ENCODE measurements at regions of chr16 and their contacts with region 1.

Region 1: DNA sequence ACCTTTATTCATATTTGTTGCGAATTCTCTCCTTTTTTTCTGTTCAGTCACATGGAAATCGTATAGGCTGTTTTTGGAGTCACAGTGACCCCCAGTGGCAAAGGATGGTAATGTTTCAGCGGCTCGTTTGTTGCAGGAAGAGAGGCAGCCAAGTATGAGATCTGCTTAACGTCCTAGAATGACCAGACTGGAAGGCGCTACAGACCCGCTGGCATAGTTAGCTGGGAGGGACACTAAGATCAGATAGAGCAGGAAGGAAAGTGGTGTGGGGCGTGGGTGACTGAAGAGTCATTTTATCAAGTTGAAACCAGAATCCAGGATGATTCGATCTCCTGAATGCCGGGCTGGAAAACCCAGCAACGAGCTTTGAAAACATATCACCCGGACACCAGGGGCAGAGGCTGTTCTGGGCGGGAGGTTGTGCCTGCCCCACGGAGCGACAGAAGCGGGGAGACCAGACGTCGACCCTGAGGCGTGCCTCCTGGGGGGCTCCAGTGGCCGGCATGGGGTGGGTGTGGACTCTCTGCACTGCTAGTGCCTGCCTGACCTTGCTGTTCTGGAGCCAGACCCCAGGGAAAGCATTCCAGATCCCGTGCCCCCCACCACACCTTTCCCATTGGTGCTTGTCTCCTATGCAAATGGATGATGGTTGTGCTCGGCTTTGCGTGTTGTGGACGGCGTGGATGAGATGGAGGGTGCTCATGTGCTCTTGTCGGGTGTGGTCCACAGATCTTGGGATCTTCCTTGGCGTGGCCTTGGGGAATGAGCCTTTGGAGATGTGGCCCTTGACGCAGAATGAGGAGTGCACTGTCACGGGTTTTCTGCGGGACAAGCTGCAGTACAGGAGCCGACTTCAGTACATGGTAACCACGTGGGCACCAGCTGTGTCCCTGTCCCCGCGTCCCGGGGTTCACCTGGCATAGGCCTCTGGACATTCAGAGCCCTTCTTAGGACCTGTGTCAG is 7.7 kb downstream of the IL34 start:
- DNase-seq: peak; percentile 89
- H3K4me3 Mint-ChIP-seq: no peak overlapping the region
- H3K27ac Mint-ChIP-seq: no peak overlapping the region
- H3K4me1 Mint-ChIP-seq: peaks cover 5% of the 10 kb centered on the region
- H3K27me3 Mint-ChIP-seq: peaks cover 1% of the 10 kb centered on the region

Region 2: DNA sequence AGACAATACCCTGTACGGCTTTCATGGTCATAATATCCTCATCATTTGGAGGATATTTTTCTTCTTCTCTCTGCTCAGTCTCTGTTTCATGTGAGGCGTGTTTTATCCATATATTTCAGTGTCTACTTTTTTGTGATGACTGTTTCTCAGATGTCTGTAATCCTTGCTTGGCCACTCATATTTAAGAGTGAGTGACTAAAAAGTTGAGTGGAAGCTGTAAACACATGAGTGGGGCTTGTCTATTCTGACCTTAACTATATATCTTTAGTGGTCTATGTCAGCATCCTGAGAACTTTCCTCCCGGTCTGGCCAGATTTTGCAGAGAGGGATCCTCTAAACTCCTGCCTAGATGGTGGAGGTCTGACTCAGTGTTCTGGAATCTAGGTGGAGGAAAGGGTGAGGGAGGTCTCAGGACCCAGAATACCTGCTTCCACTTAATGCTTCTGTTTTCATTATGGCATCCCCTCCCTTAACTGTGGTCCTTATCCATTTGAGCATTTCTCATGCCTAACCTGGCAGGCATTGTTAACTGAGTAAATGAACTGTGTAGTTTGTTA is 349.1 kb before region 1 on chr16:
- CTCF ChIA-PET with region 1: no interaction called
- POLR2A ChIA-PET with region 1: no interaction called
- intact Hi-C with region 1: no loop called
- DNase-seq: no peak
- H3K4me3 Mint-ChIP-seq: no peak overlapping the region
- H3K27ac Mint-ChIP-seq: peak overlapping the region; percentile 5
- H3K4me1 Mint-ChIP-seq: peaks cover 37% of the 10 kb centered on the region
- H3K27me3 Mint-ChIP-seq: no peaks in the 10 kb centered on the region

Region 3: GRCh38 chr16:70331588-70332358 is 322.3 kb before region 1 on chr16:
- CTCF ChIA-PET with region 1: interaction called, 18 read pairs
- POLR2A ChIA-PET with region 1: no interaction called
- intact Hi-C with region 1: no loop called
- DNase-seq: peak; percentile 21
- H3K4me3 Mint-ChIP-seq: no peak overlapping the region
- H3K27ac Mint-ChIP-seq: no peak overlapping the region
- H3K4me1 Mint-ChIP-seq: no peaks in the 10 kb centered on the region
- H3K27me3 Mint-ChIP-seq: no peaks in the 10 kb centered on the region

Region 4: GRCh38 chr16:70364399-70364798 is 289.7 kb before region 1 on chr16:
- CTCF ChIA-PET with region 1: interaction called, 13 read pairs
- POLR2A ChIA-PET with region 1: no interaction called
- intact Hi-C with region 1: no loop called
- DNase-seq: no peak
- H3K4me3 Mint-ChIP-seq: no peak overlapping the region
- H3K27ac Mint-ChIP-seq: peak overlapping the region; percentile 28
- H3K4me1 Mint-ChIP-seq: peaks cover 4% of the 10 kb centered on the region
- H3K27me3 Mint-ChIP-seq: no peaks in the 10 kb centered on the region

Region 5: GRCh38 chr16:70508752-70509151 is 145.3 kb before region 1 on chr16:
- CTCF ChIA-PET with region 1: interaction called, 4 read pairs
- POLR2A ChIA-PET with region 1: no interaction called
- intact Hi-C with region 1: loop called (anchors 1 kb)
- DNase-seq: no peak
- H3K4me3 Mint-ChIP-seq: no peak overlapping the region
- H3K27ac Mint-ChIP-seq: peak overlapping the region; percentile 54
- H3K4me1 Mint-ChIP-seq: peaks cover 6% of the 10 kb centered on the region
- H3K27me3 Mint-ChIP-seq: no peaks in the 10 kb centered on the region

Measured in activated CD4-positive, alpha-beta memory T cell treated with anti-CD3 and anti-CD28 coated beads for 36 hours (primary cell).